ENCODE measurements at regions of chr7 and their contacts with region 1.

Region 1: DNA sequence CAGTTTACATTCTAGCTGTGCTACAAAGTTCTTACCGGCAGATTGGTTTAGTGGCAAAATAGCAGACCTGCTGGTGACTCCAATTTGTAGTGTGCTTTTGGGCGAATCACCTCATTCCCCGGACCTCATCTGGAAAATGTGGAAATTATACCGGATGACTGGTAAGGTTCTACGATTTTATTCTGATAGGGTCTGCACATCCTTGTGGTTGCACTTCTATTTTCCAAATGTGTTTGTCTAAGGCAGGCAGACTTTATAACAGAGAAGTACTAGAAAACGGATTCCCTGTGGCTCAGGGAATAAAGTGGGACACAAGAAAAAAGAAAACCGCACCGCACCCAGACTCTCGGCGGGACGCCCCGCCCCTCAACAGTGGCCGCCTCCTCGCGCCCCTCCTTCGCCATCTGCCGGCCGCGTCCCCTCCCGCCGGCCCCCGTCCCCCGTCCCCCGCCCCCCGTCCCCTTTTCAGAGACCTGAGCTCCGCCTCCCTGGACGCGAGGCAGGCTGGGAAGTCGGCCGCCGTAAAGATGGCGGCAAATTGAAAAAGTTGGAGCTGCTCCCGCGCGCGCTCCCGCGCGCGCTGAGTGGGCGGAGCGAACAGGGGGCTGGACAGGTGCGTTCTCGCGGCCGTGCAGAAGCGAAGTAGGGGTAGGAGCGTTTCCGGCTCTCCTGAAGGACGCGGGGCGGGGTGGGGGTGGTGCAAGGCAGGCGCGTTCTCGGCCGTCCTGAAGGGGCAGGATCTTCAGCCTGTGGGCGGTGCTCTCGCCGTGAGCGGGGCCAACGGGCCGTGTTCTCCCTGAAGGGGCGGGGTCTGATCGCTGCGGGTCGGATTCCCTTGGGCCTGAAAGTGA is 531 bp upstream of the CCM2 start:
- DNase-seq: peak; percentile 100
- H3K4me3 ChIP-seq: peak overlapping the region; percentile 36 to 91 (median 86)
- H3K27ac ChIP-seq: peak overlapping the region; percentile 86 to 94 (median 92)
- H3K4me1 ChIP-seq: peaks cover 0 to 25% (median 13%) of the 10 kb centered on the region in 4 donors
- H3K27me3 ChIP-seq: no peaks in the 10 kb centered on the region
- CTCF ChIP-seq: no peak
- EP300 ChIP-seq: no peak
- POLR2A ChIP-seq: no peak

Region 2: GRCh38 chr7:44955733-44956132 is 43.7 kb before region 1 on chr7:
- intact Hi-C with region 1: no loop called
- DNase-seq: no peak
- H3K4me3 ChIP-seq: no peak overlapping the region
- H3K27ac ChIP-seq: no peak overlapping the region
- H3K4me1 ChIP-seq: no peaks in the 10 kb centered on the region
- H3K27me3 ChIP-seq: peaks cover 0 to 7% (median 0%) of the 10 kb centered on the region in 3 donors
- CTCF ChIP-seq: no peak
- EP300 ChIP-seq: no peak
- POLR2A ChIP-seq: no peak

Region 3: GRCh38 chr7:44986218-44987053 is 13.0 kb before region 1 on chr7:
- intact Hi-C with region 1: loop called (anchors 1 kb)
- DNase-seq: peak; percentile 96
- H3K4me3 ChIP-seq: peak overlapping the region; percentile 38 to 62 (median 55)
- H3K27ac ChIP-seq: peak overlapping the region; percentile 88 to 94 (median 91)
- H3K4me1 ChIP-seq: peaks cover 0 to 25% (median 16%) of the 10 kb centered on the region in 4 donors
- H3K27me3 ChIP-seq: no peaks in the 10 kb centered on the region
- CTCF ChIP-seq: no peak
- EP300 ChIP-seq: peak in 2 of 4 donors; percentile 1 to 10
- POLR2A ChIP-seq: peak; percentile 91 to 93

Region 4: GRCh38 chr7:45089341-45089891 is 89.9 kb after region 1 on chr7:
- intact Hi-C with region 1: loop called (anchors 5 kb)
- DNase-seq: peak; percentile 82
- H3K4me3 ChIP-seq: peak overlapping the region; percentile 51 to 79 (median 60)
- H3K27ac ChIP-seq: peak overlapping the region; percentile 76 to 82 (median 78)
- H3K4me1 ChIP-seq: peaks cover 0 to 19% (median 10%) of the 10 kb centered on the region in 4 donors
- H3K27me3 ChIP-seq: no peaks in the 10 kb centered on the region
- CTCF ChIP-seq: no peak
- EP300 ChIP-seq: no peak
- POLR2A ChIP-seq: no peak

Region 5: DNA sequence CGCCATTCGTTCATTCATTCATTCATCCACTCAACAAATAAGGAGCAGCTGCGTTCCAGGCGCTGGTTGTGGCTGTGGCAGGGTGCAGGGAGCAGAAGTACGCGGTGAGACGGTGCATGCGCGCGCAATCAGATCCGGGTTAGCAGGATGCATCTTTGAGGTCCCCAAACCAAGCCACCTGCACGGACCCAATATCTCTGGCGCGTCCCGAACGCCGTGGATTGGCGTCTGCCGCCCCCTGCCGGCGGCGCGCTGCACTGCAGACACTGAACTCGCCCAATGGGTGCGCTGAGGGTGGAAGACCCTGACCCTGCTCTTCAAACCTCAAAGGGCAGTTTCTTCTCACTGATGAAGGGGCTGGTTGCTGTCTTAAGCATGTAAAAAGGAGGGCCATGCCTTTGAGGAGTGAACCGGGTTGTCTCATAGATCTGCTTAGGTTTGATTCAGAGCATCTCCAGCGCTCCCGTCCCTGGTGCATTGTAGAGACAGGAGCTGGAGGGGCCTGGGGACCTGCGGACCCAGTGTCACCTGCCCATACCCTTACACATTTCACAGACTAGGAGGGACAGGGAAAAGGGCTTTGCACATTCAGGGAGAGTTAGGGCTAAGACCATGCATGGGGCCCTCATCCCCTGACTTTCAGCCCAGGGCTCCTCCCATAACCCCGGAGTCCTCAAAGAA is 260.6 kb after region 1 on chr7:
- intact Hi-C with region 1: no loop called
- DNase-seq: no peak
- H3K4me3 ChIP-seq: no peak overlapping the region
- H3K27ac ChIP-seq: no peak overlapping the region
- H3K4me1 ChIP-seq: no peaks in the 10 kb centered on the region
- H3K27me3 ChIP-seq: peaks cover 0 to 13% (median 5%) of the 10 kb centered on the region in 3 donors
- CTCF ChIP-seq: peak; percentile 66 to 96 (median 88)
- EP300 ChIP-seq: no peak
- POLR2A ChIP-seq: no peak

Region 6: GRCh38 chr7:45591101-45591906 is 591.8 kb after region 1 on chr7:
- intact Hi-C with region 1: no loop called
- DNase-seq: peak; percentile 56
- H3K4me3 ChIP-seq: no peak overlapping the region
- H3K27ac ChIP-seq: no peak overlapping the region
- H3K4me1 ChIP-seq: no peaks in the 10 kb centered on the region
- H3K27me3 ChIP-seq: no peaks in the 10 kb centered on the region
- CTCF ChIP-seq: no peak
- EP300 ChIP-seq: no peak
- POLR2A ChIP-seq: no peak

Region 7: GRCh38 chr7:46162609-46163008 is 1163.1 kb after region 1 on chr7:
- intact Hi-C with region 1: no loop called
- DNase-seq: no peak
- H3K4me3 ChIP-seq: no peak overlapping the region
- H3K27ac ChIP-seq: no peak overlapping the region
- H3K4me1 ChIP-seq: peaks cover 0 to 9% (median 4%) of the 10 kb centered on the region in 4 donors
- H3K27me3 ChIP-seq: no peaks in the 10 kb centered on the region
- CTCF ChIP-seq: no peak
- EP300 ChIP-seq: no peak
- POLR2A ChIP-seq: no peak

Measured in sigmoid colon (tissue), 7 donors.